Posterior vena cava (tissue), 2 donors: ENCODE measurements at regions of chr9 and their contacts with region 1.

Region 1: DNA sequence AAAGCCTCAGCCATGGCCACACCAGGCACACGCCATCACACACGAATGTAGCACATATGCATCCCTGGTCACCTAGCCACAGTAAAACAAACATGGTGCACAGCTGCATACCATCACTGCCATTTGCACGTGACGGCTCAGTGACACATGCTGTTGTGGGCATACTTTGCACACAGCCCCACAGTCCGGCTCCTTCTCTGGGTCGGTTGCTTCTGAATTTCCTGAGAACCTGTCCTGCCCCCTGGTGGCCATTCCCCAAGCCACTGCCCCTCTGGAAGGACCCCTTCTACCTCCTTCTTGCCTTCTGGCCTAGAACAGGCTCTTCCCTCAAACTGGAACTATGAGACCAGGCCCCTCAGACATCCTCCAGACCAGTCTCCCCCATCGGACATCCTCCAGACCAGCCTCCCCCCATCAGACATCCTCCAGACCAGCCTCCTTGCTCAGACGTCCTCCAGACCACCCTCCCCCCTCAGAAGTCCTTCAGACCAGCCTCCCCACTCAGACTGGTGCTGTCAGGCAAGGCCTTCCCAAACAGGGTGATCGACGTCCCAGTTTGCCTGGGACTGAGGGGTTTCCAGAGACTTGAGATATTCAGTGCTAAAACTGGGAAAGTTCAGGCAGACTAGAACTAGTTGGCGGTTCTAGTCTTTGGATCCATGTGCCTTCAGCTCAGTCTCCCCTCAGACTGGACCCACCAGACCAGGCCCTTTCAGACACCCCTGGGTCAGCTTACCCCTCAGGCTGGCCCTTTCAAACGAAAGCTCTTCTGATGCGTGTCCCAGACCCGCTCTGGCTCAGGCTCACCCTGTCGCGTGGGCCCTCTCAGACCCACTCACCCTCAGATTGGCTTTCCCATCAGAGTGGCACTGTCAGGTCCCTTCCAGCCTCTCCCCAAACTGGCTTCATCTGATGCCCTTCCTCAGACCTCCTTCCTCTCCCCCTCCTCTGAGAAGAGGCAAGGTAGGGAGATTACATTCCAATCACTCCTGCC is 24.3 kb upstream of the ENHO start:
- DNase-seq: peak; percentile 89

Region 2: DNA sequence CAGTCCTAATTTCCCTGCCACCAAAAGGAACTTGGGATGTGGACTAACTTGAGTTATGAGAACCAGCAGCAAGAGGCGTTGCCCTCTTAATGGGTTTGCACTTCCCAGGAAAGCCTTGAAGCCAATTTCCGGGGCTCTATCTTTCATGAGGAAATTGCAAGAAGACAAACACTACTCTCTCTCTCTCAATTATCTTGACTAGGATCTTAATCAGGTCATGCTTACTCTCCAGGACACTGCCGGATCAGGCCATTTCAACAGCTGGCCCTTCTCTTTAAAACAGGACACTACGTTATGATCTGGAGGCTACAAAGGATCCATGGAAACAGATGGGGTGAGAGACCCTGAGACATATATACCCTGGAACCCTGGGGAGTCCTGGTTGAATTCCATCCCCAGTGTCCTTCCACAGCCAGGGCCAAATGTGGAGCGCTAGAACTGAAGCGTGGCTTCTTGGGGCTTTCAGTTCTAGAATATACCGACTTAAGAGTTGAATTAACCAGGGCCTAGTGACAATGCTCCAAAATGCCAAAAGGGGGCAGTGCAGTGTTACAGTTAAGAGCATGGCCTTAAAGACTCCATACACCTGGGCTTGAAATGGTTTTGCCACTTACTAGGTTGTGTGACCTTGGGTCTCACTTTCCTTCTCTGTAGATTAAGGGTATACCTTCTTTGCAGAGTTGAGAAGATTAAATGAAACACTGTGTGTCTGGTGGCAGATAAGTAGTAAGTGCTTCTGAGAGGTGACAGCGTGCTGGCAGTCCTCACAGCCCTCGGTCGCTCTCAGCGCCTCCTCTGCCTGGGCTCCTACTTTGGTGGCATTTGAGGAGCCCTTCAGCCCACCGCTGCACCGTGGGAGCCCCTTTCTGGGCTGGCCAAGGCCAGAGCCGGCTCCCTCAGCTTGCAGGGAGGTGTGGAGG is 109.9 kb before region 1 on chr9:
- intact Hi-C with region 1: loop called in 1 of 2 experiments (anchors 5 kb)
- DNase-seq: no peak

Region 3: DNA sequence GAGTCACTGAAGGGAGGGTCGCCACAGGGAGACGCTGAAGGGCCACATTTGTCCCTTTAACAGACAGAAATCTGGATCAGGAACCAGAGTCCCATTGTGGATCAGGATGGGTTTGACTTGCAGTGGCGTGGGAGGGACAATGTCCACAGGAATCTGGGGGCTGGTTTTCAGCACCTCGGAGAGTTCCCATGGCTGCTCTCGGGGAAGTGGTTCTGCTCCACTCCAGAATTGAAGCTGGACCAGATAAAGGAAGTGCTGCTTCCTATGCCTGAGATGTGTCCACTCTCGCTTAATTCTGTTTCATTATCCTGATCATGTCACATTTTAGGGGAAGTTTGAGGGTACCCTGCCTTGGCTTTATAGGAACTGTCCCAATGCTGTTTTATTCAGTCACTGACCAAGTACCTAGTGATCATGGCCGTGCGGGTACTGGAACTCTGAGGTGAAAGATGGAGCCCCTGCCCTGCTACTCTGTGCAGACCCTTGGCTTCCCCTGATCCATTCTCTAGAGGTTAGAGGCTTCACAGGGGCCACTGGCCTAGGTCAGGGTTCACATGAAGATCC is 53.1 kb before region 1 on chr9:
- intact Hi-C with region 1: loop called in 1 of 2 experiments (anchors 10 kb)
- DNase-seq: no peak

Region 4: GRCh38 chr9:34591248-34591916 is 44.3 kb after region 1 on chr9:
- intact Hi-C with region 1: loop called (anchors 2 to 5 kb)
- DNase-seq: peak; percentile 97